Activated CD4-positive, alpha-beta T cell treated with anti-CD3 and anti-CD28 coated beads for 36 hours (primary cell): ENCODE measurements at regions of chr14 and their contacts with region 1.

Region 1: DNA sequence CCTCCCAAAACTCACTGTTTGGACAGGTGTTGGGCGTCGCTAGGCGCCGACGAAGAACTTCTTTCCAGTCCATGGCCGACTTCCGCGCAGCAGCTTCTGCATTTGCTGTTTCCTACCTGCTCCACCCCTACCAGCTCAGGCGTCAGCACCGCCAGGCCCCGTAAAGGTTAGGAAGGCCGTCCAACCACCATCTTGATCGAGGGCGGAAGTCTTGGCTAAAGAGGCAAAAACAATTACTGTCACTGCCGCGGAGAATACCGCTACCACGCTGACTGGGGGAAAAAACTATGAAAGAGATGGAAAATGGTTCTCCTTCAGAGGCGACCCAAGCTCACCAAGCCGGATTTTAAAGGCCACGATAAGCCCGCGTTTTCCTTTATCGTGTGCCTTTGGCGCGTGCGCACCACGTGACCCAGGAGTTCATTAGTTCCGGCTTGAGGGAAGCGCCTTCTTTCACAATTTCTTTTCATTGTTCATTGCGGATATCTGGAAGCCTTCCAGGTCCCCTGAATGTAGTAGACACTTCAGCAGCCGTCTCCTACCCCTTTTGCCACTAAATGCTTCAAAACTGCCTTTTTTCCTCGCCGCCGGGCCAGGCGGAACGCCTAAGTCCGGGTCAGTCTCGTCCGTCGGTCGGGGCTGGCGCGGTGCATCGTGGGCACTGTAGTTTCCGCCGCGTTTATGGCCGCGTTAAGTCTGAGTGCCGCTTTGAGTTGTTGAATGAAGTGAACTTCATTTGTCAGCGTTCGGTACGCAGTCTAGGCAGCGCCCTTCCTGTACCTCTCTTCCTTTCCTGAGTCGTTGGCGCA is at the starts of genes PPP2R3C and PRORP:
- DNase-seq: peak; percentile 93
- ATAC-seq: peak; percentile 87
- H3K4me3 Mint-ChIP-seq: peak within 1 kb of the TSS; percentile 87
- H3K27ac Mint-ChIP-seq: peak within 1 kb of the TSS; percentile 99
- H3K4me1 Mint-ChIP-seq: peaks cover 64% of the 10 kb centered on the region
- H3K27me3 Mint-ChIP-seq: no peaks in the 10 kb centered on the region
- total RNA-seq, gene PPP2R3C: 43.8 to 53.5 TPM
- total RNA-seq, gene PRORP: 37.3 to 51.1 TPM

Region 2: DNA sequence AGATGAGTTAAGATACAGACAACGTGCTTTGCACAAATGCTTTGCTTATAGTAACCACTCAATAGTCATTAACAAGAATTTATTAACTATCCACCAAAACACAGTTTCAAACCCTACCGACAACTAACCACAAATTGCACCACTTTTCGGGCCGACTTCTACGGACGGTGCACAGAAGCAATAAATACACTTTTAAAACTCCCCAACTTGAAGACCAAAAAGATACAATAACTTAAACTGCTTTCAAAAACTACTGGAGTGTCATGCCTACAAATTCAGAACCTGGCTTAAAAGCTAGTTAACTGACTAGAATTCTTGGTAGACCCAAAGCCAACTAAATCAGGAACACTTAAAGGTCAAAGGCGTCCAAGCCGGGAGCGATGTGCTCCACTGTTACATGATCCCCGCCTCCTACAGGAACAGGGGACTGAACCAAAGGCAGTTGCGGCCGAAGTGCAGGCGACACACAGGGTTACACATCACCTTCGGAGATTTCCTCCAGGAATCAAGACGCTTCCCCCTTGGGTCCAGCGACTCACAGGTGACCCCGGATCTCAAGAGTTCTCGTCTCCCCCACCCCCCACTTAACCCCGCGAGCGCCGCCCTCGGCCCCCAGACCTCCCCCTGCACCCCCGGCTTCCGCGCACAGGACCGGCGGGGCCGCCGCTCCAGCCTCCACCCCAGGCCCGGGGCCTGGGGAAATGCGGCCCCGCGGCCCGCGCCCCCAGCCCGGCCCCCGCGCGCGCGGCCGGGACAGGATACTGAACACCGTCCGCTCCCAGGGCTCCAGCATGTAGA is 660.6 kb before region 1 on chr14:
- CTCF ChIA-PET with region 1: no interaction called
- POLR2A ChIA-PET with region 1: no interaction called
- intact Hi-C with region 1: loop called in 1 of 2 experiments (anchors 1 kb)
- DNase-seq: peak; percentile 50
- ATAC-seq: peak; percentile 62
- H3K4me3 Mint-ChIP-seq: peak overlapping the region; percentile 91
- H3K27ac Mint-ChIP-seq: peak overlapping the region; percentile 85
- H3K4me1 Mint-ChIP-seq: peaks cover 19% of the 10 kb centered on the region
- H3K27me3 Mint-ChIP-seq: no peaks in the 10 kb centered on the region

Region 3: DNA sequence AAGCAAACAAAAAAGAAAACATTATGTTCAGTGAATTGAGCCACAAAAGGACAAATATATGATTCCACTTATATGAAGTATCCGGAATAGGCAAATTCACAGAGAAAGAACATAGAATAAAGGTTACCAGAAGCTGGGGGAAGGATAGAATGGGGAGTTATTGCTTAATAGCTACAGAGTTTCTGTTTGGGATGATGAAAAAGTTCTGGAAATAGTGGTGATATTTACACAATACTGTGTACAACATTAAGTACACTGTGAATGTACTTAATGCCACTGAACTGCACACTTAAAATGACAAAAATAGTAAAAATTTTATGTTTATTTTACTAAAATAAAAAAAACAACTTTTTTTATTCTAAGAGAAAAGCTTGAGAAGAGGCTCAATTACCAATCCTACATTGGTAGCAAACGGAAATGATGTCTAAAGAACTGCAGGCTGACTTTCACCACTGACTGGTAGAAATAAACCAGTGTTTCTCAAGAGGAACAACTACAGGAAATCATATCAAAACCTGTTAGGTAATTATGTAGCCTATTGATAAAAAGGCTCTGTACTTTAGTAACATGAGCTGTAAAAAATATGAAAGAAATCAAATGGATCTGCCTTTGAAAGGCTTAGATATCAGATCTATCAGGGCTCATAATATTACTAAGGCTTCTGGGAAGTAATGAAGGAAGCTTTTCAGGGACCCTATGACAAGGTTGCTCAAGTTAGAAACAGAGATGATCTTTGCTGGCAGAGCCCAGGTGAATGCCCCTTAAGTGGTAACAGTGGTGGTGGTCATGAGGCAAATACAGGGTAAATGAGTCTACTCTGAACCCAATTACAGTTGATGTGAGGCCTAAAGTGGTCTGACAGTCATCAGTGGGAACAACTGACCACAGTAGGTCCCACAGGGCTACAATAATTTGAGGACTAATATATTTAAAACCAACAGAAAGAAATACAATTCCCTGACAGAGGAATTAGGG is 288.3 kb before region 1 on chr14:
- CTCF ChIA-PET with region 1: no interaction called
- POLR2A ChIA-PET with region 1: interaction called, 11 read pairs
- intact Hi-C with region 1: no loop called
- DNase-seq: no peak
- ATAC-seq: no peak
- H3K4me3 Mint-ChIP-seq: no peak overlapping the region
- H3K27ac Mint-ChIP-seq: peak overlapping the region; percentile 0
- H3K4me1 Mint-ChIP-seq: peaks cover 41% of the 10 kb centered on the region
- H3K27me3 Mint-ChIP-seq: no peaks in the 10 kb centered on the region

Region 4: DNA sequence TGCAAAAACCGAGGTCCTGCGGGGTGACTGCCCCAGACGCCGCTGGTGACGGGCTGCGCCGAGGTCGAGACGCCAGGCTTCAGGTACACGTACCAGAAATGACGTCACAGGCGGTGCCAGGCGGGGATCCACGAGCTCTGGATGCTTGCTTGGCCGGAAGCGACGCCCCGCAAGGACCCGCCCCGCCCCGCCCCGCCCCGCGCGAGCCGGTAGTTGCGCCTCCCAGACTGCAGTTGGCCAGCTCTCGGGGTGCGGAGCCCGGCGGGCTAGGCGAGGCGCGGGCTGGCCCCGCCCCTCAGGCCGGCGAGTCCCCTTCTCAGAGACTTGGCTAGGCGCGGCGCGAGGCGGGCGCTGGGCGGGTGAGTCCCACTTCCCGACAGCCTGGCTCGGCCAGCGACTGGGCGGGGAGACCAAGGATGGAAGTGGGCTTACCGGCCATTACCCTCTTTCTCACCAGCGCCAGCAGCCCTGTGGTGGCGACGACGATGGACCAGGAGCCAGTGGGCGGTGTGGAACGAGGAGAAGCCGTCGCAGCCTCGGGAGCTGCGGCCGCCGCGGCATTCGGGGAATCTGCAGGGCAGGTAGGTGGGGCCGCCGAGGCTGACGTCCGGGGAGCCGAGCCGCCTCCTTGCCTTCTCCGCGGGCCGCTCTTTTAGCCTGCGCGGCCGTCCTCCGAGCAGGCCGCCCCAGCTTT is 75.9 kb before region 1 on chr14 and contains the start of gene FAM177A1:
- CTCF ChIA-PET with region 1: no interaction called
- POLR2A ChIA-PET with region 1: interaction called, 19 read pairs
- intact Hi-C with region 1: loop called (anchors 1 to 2 kb)
- DNase-seq: peak; percentile 100
- ATAC-seq: peak; percentile 94
- H3K4me3 Mint-ChIP-seq: peak within 1 kb of the TSS; percentile 95
- H3K27ac Mint-ChIP-seq: peak within 1 kb of the TSS; percentile 99
- H3K4me1 Mint-ChIP-seq: peaks cover 23% of the 10 kb centered on the region
- H3K27me3 Mint-ChIP-seq: no peaks in the 10 kb centered on the region
- total RNA-seq, gene FAM177A1: 35.4 to 37.2 TPM

Region 5: GRCh38 chr14:35292051-35292769 is 170.1 kb after region 1 on chr14 and contains the start of gene PSMA6:
- CTCF ChIA-PET with region 1: interaction called, 3 read pairs
- POLR2A ChIA-PET with region 1: no interaction called
- intact Hi-C with region 1: loop called (anchors 1 kb)
- DNase-seq: peak; percentile 100
- ATAC-seq: peak; percentile 86
- H3K4me3 Mint-ChIP-seq: peak within 1 kb of the TSS; percentile 85
- H3K27ac Mint-ChIP-seq: peak within 1 kb of the TSS; percentile 96
- H3K4me1 Mint-ChIP-seq: peaks cover 52% of the 10 kb centered on the region
- H3K27me3 Mint-ChIP-seq: no peaks in the 10 kb centered on the region
- total RNA-seq, gene PSMA6: 374 to 425 TPM

Region 6: GRCh38 chr14:35826218-35826951 is 704.3 kb after region 1 on chr14 and contains the start of gene BRMS1L:
- CTCF ChIA-PET with region 1: no interaction called
- POLR2A ChIA-PET with region 1: no interaction called
- intact Hi-C with region 1: loop called (anchors 1 to 5 kb)
- DNase-seq: peak; percentile 99
- ATAC-seq: peak; percentile 98
- H3K4me3 Mint-ChIP-seq: peak within 1 kb of the TSS; percentile 71
- H3K27ac Mint-ChIP-seq: peak within 1 kb of the TSS; percentile 90
- H3K4me1 Mint-ChIP-seq: peaks cover 24% of the 10 kb centered on the region
- H3K27me3 Mint-ChIP-seq: no peaks in the 10 kb centered on the region
- total RNA-seq, gene BRMS1L: 5.3 to 7.8 TPM